Activated B cell treated with CpG ODN at 0.5 μM for 24 hours (primary cell): ENCODE measurements at regions of chr11 and their contacts with region 1.

Region 1: GRCh38 chr11:20080032-20080685 is 80.1 kb downstream of the DBX1 start:
- DNase-seq: no peak
- ATAC-seq: peak; percentile 98
- H3K4me3 Mint-ChIP-seq: peak overlapping the region; percentile 12
- H3K27ac Mint-ChIP-seq: no peak overlapping the region
- H3K4me1 Mint-ChIP-seq: peaks cover 36% of the 10 kb centered on the region
- H3K27me3 Mint-ChIP-seq: peaks cover 12% of the 10 kb centered on the region
- CTCF ChIP-seq: no peak

Region 2: GRCh38 chr11:19978668-19979518 is 101.3 kb before region 1 on chr11:
- CTCF ChIA-PET with region 1: no interaction called
- POLR2A ChIA-PET with region 1: no interaction called
- intact Hi-C with region 1: loop called (anchors 1 kb)
- DNase-seq: no peak
- ATAC-seq: peak; percentile 35
- H3K4me3 Mint-ChIP-seq: peak overlapping the region; percentile 50
- H3K27ac Mint-ChIP-seq: peak overlapping the region; percentile 77
- H3K4me1 Mint-ChIP-seq: peaks cover 22% of the 10 kb centered on the region
- H3K27me3 Mint-ChIP-seq: peaks cover 45% of the 10 kb centered on the region
- CTCF ChIP-seq: no peak

Region 3: GRCh38 chr11:20099527-20099926 is 19.4 kb after region 1 on chr11:
- CTCF ChIA-PET with region 1: no interaction called
- POLR2A ChIA-PET with region 1: no interaction called
- intact Hi-C with region 1: loop called (anchors 1 kb)
- DNase-seq: no peak
- ATAC-seq: peak; percentile 77
- H3K4me3 Mint-ChIP-seq: peak overlapping the region; percentile 30
- H3K27ac Mint-ChIP-seq: no peak overlapping the region
- H3K4me1 Mint-ChIP-seq: peaks cover 19% of the 10 kb centered on the region
- H3K27me3 Mint-ChIP-seq: peaks cover 17% of the 10 kb centered on the region
- CTCF ChIP-seq: no peak

Region 4: DNA sequence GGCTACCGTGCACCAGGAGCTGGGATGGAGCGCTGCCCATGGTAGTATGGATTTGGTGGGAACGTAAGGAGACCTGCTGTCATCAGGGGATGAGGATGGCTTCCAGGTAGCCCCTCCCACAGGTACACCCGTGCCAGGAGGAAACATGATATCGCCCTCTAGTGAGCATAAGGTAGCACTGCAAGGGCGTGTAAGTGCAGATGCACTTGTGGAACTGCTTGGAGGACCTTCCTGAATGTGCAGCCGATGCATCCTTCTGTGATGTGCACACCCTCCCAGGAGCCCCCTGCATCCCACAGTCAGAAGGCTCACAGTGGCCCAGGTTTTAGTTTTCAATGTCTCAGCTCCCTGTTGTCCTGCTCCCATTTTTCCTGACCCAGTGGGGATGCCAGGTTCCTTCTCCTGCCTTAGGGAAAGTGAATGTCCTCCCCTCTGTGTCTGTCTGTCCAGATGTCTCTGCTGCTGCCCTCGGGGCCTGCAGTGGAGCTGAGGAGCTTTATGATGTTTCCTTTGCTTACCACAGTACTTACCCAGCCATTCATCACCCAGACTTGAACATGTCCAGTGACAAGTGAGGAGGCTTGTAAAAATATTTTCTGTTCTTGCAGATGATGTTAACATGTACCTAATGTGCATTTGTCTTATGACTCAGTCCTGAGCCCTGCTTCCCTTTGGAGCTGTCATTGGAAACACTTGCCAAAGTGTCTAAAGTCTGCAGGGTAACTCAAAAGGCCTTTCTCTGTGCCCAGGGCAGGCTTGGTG is 30.9 kb after region 1 on chr11:
- CTCF ChIA-PET with region 1: no interaction called
- POLR2A ChIA-PET with region 1: no interaction called
- intact Hi-C with region 1: no loop called
- DNase-seq: no peak
- ATAC-seq: peak; percentile 91
- H3K4me3 Mint-ChIP-seq: no peak overlapping the region
- H3K27ac Mint-ChIP-seq: no peak overlapping the region
- H3K4me1 Mint-ChIP-seq: peaks cover 3% of the 10 kb centered on the region
- H3K27me3 Mint-ChIP-seq: peaks cover 11% of the 10 kb centered on the region
- CTCF ChIP-seq: peak; percentile 21